Right ventricle myocardium inferior (tissue), 1 donor: ENCODE measurements at regions of chr13 and their contacts with region 1.

Region 1: DNA sequence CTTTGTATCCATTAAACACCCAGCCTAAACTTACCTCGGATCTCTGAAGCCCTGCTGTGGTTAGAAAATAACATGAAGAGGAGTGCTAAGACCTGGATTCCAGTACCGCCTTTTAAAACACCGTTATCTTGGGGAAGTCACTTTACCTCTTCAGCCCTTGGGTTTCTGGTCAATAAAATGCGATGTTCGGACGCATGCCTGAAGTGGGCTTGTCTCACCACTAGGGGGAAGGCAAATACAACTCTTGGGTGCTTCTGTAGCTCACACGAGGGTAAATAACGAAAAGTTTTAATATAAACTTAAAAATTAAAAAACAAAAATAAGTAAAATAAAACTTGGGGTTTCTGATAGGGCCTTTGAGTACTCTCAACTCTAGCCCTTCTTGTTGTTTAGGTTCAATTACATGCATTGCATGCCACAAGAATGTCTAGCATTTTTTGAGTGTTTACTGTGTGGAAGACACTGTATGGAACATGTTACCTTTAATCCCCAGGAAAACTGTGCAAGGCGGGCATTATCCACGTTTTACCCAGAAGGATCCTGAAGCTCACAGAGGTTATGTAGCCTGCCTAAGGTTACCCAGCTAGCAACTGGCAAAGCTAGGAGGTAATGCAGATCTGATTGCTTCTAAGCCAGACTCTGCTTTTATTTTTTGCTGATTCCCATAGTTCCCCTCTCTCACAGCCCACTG is 240.4 kb downstream of the LMO7 start:
- DNase-seq: no peak
- ATAC-seq: peak; percentile 77

Region 2: GRCh38 chr13:76019421-76020044 is 143.0 kb after region 1 on chr13:
- intact Hi-C with region 1: loop called (anchors 2 kb)
- DNase-seq: peak; percentile 51
- ATAC-seq: no peak

Region 3: DNA sequence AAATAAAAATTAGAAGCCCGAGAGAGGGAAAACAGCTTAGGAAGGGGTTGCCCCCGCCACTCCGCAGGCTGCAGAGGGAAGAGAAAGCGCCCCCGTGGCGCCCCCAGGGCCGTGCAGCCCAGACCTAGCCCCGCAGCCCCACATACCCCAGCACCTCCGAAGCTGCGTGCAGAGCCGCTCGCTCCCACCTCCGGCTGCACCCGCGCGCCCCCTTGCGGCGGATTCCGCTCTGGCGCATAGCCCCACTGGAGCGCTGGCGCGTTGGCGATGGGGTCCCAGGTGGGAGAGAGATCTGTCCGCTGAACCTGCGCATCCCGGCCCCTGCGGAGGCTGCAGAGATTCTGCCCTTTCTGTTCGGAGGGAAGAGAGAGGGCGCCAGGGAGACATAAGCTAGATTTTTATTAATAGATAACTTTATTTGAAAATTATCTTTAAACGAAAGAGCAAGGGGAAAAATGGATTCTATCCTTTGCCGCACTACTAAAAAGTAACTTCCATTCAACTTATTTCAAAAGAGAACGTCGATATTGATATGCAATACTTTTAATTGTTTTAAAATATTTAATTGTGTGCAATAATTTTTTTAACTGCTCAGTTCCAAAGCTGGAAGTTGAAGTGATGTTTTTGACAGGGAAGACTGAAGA is 1103.7 kb after region 1 on chr13:
- intact Hi-C with region 1: loop called (anchors 5 kb)
- DNase-seq: peak; percentile 93
- ATAC-seq: peak; percentile 95